ENCODE measurements at regions of chr9 and their contacts with region 1.

Region 1: GRCh38 chr9:96383165-96383942 is at the start of gene SLC35D2:
- DNase-seq: peak in 8 of 10 donors; percentile 17 to 91 (median 32)

Region 2: DNA sequence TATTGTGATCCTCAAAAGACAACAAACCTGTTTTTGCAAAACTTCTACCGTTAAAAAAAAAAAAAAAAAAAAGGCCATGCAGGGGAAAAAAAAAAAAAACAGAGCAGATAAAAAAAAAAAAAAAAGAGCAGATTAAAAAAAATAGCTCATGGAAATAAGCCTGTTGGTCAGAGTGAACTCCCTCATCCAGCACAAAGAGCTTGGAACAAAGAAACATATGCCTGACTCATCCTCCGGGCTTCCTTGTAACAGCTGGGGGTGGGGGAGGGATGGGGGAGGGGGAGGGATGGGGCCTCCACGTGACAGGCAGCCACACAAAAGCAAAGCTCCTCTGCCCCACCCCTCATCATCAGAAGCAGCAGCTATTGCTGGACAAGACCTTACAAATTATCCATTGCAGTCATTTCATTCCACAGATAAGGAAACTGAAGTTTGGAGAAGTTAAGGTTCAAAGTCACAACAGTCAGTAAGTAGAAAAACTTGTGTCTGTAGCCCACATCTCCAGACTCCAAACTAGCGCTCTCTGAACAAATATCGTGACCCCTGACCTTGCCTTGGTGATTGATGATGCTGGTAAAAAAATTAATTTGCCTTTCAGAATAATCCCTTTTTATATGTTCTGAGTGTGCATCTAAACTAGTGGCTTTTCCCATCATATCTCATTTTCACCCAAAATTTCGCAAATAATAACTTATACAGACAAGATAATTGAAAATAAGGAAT is 38.7 kb before region 1 on chr9:
- intact Hi-C with region 1: loop called (anchors 5 kb)
- DNase-seq: peak in 5 of 10 donors; percentile 22 to 90 (median 53)

Region 3: GRCh38 chr9:96418074-96418809 is 34.9 kb after region 1 on chr9 and contains the start of gene ZNF367:
- intact Hi-C with region 1: loop called (anchors 5 kb)
- DNase-seq: peak; percentile 91 to 99 (median 96)

Measured in posterior cingulate gyrus (tissue), 11 donors.